Colonic mucosa (tissue), 4 donors: ENCODE measurements at regions of chr10 and their contacts with region 1.

Region 1: GRCh38 chr10:13659897-13660550 is 73.3 kb downstream of the PRPF18 start:
- DNase-seq: peak; percentile 61
- H3K4me3 ChIP-seq: no peak overlapping the region
- H3K27ac ChIP-seq: no peak overlapping the region
- H3K4me1 ChIP-seq: no peaks in the 10 kb centered on the region
- H3K27me3 ChIP-seq: no peaks in the 10 kb centered on the region
- CTCF ChIP-seq: peak; percentile 81

Region 2: GRCh38 chr10:13189961-13190360 is 470.1 kb before region 1 on chr10:
- intact Hi-C with region 1: no loop called
- DNase-seq: no peak
- H3K4me3 ChIP-seq: no peak overlapping the region
- H3K27ac ChIP-seq: no peak overlapping the region
- H3K4me1 ChIP-seq: no peaks in the 10 kb centered on the region
- H3K27me3 ChIP-seq: no peaks in the 10 kb centered on the region
- CTCF ChIP-seq: no peak

Region 3: DNA sequence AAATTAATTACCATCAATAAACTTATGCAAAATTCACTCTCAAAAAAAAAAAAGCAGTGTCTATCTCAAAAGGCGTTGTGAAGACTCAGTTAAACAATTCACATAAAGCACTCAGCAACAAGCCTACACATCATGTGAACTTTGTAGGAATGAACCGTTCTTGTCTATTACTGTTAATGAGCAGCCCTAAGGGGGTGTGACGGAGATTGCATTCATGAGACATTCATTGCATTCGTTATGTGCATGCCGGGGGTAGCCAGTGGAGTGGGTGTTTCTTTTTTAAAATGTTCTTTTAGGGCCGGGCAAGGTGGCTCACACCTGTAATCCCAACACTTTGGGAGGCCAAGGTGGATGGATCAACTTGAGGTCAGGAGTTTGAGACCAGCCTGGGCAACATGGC is 119.7 kb after region 1 on chr10:
- intact Hi-C with region 1: loop called (anchors 2 kb)
- DNase-seq: no peak
- H3K4me3 ChIP-seq: no peak overlapping the region
- H3K27ac ChIP-seq: no peak overlapping the region
- H3K4me1 ChIP-seq: no peaks in the 10 kb centered on the region
- H3K27me3 ChIP-seq: no peaks in the 10 kb centered on the region
- CTCF ChIP-seq: no peak

Region 4: DNA sequence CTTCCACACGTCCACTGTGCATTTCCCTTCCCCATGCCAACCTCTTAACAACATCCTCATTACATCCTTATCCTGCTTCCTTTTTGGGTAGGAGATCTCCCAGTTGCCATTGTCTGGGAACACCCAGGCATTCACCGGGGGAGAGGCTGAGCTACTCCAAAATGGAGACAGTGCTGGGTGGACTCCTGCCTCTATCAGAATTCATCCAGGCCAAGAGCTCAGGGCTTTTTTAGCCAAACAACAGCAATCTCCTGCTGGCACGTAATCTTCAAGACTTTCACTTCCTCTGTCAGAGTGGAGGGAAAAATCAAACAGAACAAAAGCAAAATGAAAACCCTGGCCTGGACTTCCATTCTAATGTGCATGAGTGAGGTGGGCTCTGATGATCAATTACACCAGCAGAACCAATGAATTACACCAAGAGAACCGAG is 171.7 kb after region 1 on chr10:
- intact Hi-C with region 1: no loop called
- DNase-seq: no peak
- H3K4me3 ChIP-seq: no peak overlapping the region
- H3K27ac ChIP-seq: no peak overlapping the region
- H3K4me1 ChIP-seq: no peaks in the 10 kb centered on the region
- H3K27me3 ChIP-seq: no peaks in the 10 kb centered on the region
- CTCF ChIP-seq: no peak